BJ (cell line): ENCODE measurements at regions of chr13 and their contacts with region 1.

Region 1: DNA sequence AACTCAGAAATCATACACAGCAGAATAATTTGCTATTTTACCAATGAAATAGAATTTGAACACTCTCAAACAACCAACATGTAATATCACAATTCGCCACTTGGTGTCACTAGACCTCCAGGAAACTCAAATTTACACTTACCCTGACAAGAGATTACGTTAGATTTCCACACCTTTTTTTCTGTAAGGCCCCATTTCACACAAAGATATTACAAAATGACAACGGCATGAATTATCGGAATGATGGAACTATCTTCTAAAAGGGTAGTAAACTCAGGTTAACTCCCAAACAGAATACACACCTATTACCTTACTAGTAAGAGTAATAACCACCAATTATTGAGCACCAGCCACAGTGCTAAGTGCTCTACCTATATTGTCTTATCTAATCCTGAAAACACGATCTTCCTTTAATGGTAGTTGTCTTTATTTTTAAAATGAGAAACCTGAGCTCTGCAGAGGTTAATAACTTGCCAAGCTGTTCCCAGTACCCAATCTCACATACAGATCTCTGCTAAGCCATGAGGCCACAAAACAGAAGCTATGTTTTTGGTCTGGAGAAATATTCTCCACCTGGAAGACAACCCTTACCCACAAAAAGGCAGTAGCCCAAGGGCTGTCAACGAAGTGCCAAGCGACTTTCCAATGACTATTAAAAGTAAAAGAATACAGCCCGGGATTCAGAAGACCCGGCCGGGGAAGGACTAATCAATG is 152.4 kb downstream of the DCLK1 start:
- DNase-seq: no peak
- H3K4me3 ChIP-seq: no peak overlapping the region
- H3K27me3 ChIP-seq: no peaks in the 10 kb centered on the region
- CTCF ChIP-seq: peak; percentile 60

Region 2: DNA sequence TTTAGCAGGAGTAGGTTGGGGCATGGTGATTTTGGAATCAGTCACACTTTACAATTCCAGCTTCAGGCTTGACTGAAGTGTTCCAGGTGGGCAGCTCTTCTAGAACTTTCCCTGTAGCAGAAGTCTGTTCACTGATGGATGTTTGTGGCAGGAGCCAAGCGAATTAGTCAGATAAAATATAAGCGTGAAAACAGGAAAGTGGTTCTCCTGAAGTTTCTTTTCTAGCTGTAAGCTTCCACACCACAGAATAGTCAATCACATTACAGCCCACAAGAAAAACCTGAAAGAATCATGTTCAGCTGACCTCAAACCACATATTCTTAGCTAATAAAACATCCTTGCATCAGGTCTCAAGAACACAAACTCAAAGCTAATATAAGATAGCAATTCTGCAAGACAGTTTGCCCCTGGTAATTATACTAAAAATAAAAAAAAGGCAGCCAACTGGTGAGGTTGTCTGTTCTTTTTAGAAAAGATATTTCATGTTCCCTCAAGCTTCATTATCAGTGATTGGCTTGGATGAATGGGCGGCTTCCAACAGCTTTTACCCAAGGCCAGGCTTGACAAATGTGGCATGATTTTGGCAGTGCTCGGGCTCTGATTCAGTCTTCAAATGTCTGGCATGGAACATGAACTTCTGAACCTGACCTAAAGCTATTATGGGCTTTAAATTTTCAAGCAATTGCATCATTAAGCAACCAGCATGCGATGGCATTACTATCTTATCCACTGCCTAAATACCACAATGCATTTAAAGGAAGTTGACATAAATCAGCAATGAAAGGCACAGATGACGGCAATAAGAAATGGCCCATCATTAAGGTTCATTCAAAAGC is 15.6 kb after region 1 on chr13:
- CTCF ChIA-PET with region 1: interaction called, 13 read pairs
- POLR2A ChIA-PET with region 1: no interaction called
- DNase-seq: peak; percentile 68
- H3K4me3 ChIP-seq: no peak overlapping the region
- H3K27me3 ChIP-seq: no peaks in the 10 kb centered on the region; the same call in 1 of the 2 replicates
- CTCF ChIP-seq: no peak

Region 3: GRCh38 chr13:36261976-36262375 is 283.2 kb after region 1 on chr13:
- CTCF ChIA-PET with region 1: interaction called, 14 read pairs
- POLR2A ChIA-PET with region 1: no interaction called
- DNase-seq: no peak
- H3K4me3 ChIP-seq: no peak overlapping the region
- H3K27me3 ChIP-seq: no peaks in the 10 kb centered on the region
- CTCF ChIP-seq: no peak

Region 4: DNA sequence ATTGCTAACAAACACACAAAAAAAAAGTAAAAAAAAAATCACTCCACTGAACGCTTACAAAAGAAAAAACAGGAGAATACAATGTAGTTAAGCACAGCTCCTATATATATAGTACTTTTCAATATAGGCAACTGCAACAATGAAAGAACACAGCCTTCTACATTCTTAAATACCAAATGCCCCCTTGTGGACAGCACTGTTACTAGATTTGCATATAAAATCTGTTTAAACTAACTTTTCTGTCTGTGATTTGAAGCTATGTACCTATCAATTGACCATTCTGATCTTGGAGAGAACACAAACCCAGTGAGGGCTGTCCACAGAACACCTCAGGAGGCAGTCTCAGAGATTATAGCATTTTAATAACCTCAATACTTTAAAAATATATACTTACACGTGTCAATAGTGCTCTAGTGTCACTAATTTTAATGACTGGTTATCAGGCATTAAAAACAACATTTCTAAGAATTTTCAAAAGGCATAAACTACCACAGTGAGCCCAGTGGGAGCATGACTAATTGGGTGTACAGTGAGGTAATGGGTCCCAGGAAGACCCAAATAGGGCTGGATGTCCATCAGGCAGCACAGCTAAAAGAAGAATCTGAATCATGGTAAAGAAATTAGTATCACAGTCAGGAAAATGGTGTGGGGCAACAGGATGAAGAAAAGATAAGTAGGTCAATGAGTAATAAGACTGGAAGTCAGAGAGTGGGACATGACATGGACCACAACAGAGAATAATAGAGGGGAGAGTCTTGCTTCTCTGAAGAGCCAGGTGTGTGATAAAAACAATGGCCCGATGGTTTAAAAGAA is 296.6 kb after region 1 on chr13:
- CTCF ChIA-PET with region 1: interaction called, 296 read pairs
- POLR2A ChIA-PET with region 1: no interaction called
- DNase-seq: no peak
- H3K4me3 ChIP-seq: no peak overlapping the region
- H3K27me3 ChIP-seq: no peaks in the 10 kb centered on the region
- CTCF ChIP-seq: peak; percentile 63